Activated CD4-positive, alpha-beta T cell treated with anti-CD3 and anti-CD28 coated beads for 36 hours (primary cell): ENCODE measurements at regions of chr14 and their contacts with region 1.

Region 1: DNA sequence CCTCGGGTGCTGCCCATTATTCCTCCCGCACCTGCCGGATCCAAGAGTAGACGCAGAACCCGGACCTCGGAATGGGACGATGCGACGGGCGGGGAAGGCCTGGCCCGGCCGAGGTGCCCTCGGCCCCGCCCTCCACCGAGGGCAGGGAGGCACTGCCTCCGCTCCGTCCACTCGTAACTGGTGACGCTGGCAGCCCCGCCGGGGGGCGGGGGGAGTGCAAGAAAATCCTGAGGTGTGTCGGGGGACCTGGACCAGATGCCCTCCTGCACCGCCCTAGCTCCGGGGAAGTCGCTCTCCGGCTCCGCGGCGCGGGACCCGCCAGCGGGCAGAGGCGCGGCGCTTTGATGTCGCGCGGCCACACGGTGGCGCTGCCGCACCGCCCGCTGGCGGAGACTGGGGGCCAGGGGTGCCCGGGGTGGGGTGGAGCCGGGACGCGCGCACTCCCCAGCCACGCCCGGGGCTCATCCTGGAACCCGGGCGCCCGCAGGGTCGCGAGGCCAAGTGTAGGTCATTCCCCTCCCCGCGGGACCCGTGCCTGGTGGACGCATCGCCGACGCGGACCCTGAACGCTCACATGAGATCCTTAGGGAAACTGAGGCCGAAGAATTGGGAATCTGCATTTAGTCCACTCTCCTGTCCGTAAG is 202.8 kb downstream of the TTC8 start:
- DNase-seq: peak; percentile 76
- ATAC-seq: peak; percentile 96
- H3K4me3 Mint-ChIP-seq: peak overlapping the region; percentile 60
- H3K27ac Mint-ChIP-seq: no peak overlapping the region
- H3K4me1 Mint-ChIP-seq: peaks cover 2% of the 10 kb centered on the region
- H3K27me3 Mint-ChIP-seq: peaks cover 59% of the 10 kb centered on the region

Region 2: GRCh38 chr14:89067293-89067972 is 40.2 kb after region 1 on chr14:
- CTCF ChIA-PET with region 1: no interaction called
- POLR2A ChIA-PET with region 1: no interaction called
- intact Hi-C with region 1: loop called in 1 of 2 experiments (anchors 1 kb)
- DNase-seq: peak; percentile 9
- ATAC-seq: peak; percentile 95
- H3K4me3 Mint-ChIP-seq: no peak overlapping the region
- H3K27ac Mint-ChIP-seq: no peak overlapping the region
- H3K4me1 Mint-ChIP-seq: peaks cover 15% of the 10 kb centered on the region
- H3K27me3 Mint-ChIP-seq: peaks cover 21% of the 10 kb centered on the region

Region 3: DNA sequence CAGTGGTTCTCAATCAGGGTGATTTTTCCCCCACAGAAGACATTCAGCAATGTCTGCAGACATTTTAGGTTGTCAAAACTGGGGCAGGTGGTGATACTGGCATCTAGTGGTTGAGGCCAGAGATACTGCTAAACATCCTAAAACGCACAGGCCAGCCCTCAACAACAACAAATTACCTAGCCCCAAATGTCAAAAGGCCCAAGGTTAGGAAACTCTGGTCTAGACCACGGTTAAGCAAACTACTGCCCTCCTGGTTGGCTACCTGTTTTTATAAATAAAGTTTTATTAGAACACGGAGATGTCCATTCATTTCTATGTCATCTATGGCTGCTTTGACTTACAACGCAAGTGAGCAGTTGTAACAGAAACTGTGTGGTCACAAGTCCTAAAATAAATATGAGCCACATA is 740.6 kb after region 1 on chr14:
- CTCF ChIA-PET with region 1: no interaction called
- POLR2A ChIA-PET with region 1: no interaction called
- intact Hi-C with region 1: loop called (anchors 5 kb)
- DNase-seq: peak; percentile 78
- ATAC-seq: peak; percentile 95
- H3K4me3 Mint-ChIP-seq: peak overlapping the region; percentile 13
- H3K27ac Mint-ChIP-seq: peak overlapping the region; percentile 82
- H3K4me1 Mint-ChIP-seq: peaks cover 25% of the 10 kb centered on the region
- H3K27me3 Mint-ChIP-seq: peaks cover 2% of the 10 kb centered on the region

Region 4: GRCh38 chr14:89773644-89774316 is 746.6 kb after region 1 on chr14:
- CTCF ChIA-PET with region 1: no interaction called
- POLR2A ChIA-PET with region 1: no interaction called
- intact Hi-C with region 1: loop called (anchors 5 kb)
- DNase-seq: peak; percentile 85
- ATAC-seq: peak; percentile 97
- H3K4me3 Mint-ChIP-seq: peak overlapping the region; percentile 37
- H3K27ac Mint-ChIP-seq: peak overlapping the region; percentile 76
- H3K4me1 Mint-ChIP-seq: peaks cover 21% of the 10 kb centered on the region
- H3K27me3 Mint-ChIP-seq: peaks cover 2% of the 10 kb centered on the region

Region 5: GRCh38 chr14:89915114-89915878 is 888.1 kb after region 1 on chr14:
- CTCF ChIA-PET with region 1: interaction called, 6 read pairs
- POLR2A ChIA-PET with region 1: no interaction called
- intact Hi-C with region 1: loop called (anchors 1 kb)
- DNase-seq: peak; percentile 73
- ATAC-seq: no peak
- H3K4me3 Mint-ChIP-seq: no peak overlapping the region
- H3K27ac Mint-ChIP-seq: no peak overlapping the region
- H3K4me1 Mint-ChIP-seq: peaks cover 3% of the 10 kb centered on the region
- H3K27me3 Mint-ChIP-seq: peaks cover 3% of the 10 kb centered on the region

Region 6: GRCh38 chr14:90060312-90060964 is 1033.2 kb after region 1 on chr14:
- CTCF ChIA-PET with region 1: interaction called, 3 read pairs
- POLR2A ChIA-PET with region 1: no interaction called
- intact Hi-C with region 1: loop called in 1 of 2 experiments (anchors 1 kb)
- DNase-seq: peak; percentile 77
- ATAC-seq: peak; percentile 86
- H3K4me3 Mint-ChIP-seq: peak overlapping the region; percentile 64
- H3K27ac Mint-ChIP-seq: no peak overlapping the region
- H3K4me1 Mint-ChIP-seq: peaks cover 24% of the 10 kb centered on the region
- H3K27me3 Mint-ChIP-seq: peaks cover 64% of the 10 kb centered on the region

Region 7: DNA sequence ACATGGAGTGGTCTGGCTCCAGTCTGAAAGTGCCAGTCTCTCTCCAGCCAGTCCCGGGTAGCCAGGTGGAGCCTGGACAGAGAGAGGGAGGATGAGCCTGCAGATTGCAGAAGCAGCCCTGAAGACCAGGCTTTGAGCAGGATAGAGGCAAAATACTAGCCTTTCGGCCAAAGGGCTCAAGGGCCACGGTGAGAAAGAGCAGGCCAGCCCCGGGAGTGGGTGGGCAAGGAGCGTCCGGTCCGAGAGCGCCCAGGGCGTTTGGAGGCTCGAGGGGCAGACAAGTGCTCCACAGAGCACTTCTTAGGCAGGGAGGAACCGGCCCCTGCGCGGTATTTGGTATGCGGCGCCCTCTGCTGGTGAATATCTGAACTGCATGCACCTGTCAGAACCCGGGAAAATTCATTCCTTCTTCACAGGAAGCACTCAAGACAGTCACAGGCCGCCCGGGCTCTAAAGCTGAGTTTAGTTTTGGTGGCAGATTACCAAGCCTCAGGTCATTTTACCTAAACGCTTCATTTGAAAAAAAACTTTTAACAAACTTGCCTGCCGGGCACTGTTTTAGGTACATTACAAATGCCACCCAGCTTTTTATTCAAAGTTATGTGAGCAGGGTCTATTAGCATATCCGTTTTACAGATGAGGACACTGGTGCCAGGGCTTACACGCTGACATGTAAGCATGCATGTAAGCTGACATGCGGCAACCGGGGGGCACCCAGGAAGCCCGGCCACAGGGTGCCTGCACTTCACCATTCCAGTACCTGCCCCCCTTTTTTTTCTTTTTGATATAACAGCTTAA is 1208.2 kb after region 1 on chr14:
- CTCF ChIA-PET with region 1: no interaction called
- POLR2A ChIA-PET with region 1: no interaction called
- intact Hi-C with region 1: loop called (anchors 5 kb)
- DNase-seq: peak; percentile 82
- ATAC-seq: peak; percentile 61
- H3K4me3 Mint-ChIP-seq: no peak overlapping the region
- H3K27ac Mint-ChIP-seq: no peak overlapping the region
- H3K4me1 Mint-ChIP-seq: no peaks in the 10 kb centered on the region
- H3K27me3 Mint-ChIP-seq: peaks cover 7% of the 10 kb centered on the region